Naive thymus-derived CD8-positive, alpha-beta T cell (primary cell): ENCODE measurements at regions of chr10 and their contacts with region 1.

Region 1: GRCh38 chr10:62038609-62039190 is 137.2 kb downstream of the ARID5B start:
- DNase-seq: peak; percentile 37 to 80 (median 66)
- ATAC-seq: peak; percentile 77 to 94
- H3K4me3 Mint-ChIP-seq: peak overlapping the region in 7 of 10 donors; percentile 51 to 72 (median 65)
- H3K27ac Mint-ChIP-seq: peak overlapping the region in 7 of 10 donors; percentile 23 to 78 (median 47)
- H3K4me1 Mint-ChIP-seq: peaks cover 12 to 81% (median 46%) of the 10 kb centered on the region in 4 donors
- H3K27me3 Mint-ChIP-seq: no peaks in the 10 kb centered on the region

Region 2: GRCh38 chr10:61903221-61903927 is 135.3 kb before region 1 on chr10:
- POLR2A ChIA-PET with region 1: interaction called, 12 read pairs
- DNase-seq: peak; percentile 48 to 81 (median 62)
- ATAC-seq: peak; percentile 54 to 58
- H3K4me3 Mint-ChIP-seq: peak overlapping the region; percentile 83 to 96 (median 93)
- H3K27ac Mint-ChIP-seq: peak overlapping the region; percentile 91 to 98 (median 96)
- H3K4me1 Mint-ChIP-seq: peaks cover 9 to 50% (median 34%) of the 10 kb centered on the region in 4 donors
- H3K27me3 Mint-ChIP-seq: peaks cover 0 to 4% (median 0%) of the 10 kb centered on the region in 5 donors